Astrocyte of the cerebellum (primary cell): ENCODE measurements at regions of chr1 and their contacts with region 1.

Region 1: DNA sequence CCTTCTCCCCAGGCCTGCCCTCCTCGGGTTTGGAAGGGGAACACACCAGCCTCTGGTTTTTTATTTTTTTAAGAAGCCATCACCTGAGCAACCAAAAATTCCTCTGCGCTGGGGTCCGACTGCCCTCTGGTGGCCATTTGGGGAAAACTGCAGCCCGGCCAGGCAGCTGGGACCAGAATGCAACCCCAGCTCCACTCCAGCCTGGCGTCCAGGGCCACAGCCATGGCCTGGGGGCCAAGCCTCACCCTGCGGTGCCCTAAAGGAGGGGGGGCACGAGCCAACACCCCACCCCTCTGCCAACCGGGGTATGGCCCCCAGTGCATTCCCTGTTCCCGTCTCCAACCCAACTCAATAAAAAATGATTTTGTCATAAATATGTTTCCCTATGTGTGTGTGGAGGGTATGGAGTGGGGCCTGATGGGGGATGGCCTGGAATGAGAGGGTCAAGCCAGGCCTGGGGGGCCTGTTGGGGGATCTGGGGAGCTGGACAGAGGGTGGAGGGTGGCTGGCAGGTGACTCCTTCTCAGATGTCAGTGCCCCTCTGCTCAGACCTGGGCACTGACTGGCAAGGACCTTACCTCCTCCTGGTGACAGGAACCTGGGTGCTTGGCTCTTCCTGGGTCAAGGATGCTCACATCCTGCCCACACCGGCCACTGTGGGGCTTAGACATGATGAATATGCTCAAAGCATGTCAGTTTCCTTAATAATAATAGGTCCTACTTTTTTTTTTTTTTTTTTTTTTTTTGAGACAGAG is 3.2 kb downstream of the GPR3 start:
- DNase-seq: peak; percentile 40
- H3K4me3 ChIP-seq: no peak overlapping the region
- CTCF ChIP-seq: peak; percentile 98

Region 2: GRCh38 chr1:27292106-27292505 is 103.5 kb before region 1 on chr1:
- in situ Hi-C with region 1: loop called (anchors 5 kb)
- DNase-seq: no peak
- H3K4me3 ChIP-seq: no peak overlapping the region
- CTCF ChIP-seq: no peak

Region 3: GRCh38 chr1:27332536-27333281 is 62.9 kb before region 1 on chr1:
- in situ Hi-C with region 1: no loop called
- DNase-seq: no peak
- H3K4me3 ChIP-seq: no peak overlapping the region
- CTCF ChIP-seq: peak; percentile 89